CD8-positive, alpha-beta T cell (primary cell): ENCODE measurements at regions of chr10 and their contacts with region 1.

Region 1: DNA sequence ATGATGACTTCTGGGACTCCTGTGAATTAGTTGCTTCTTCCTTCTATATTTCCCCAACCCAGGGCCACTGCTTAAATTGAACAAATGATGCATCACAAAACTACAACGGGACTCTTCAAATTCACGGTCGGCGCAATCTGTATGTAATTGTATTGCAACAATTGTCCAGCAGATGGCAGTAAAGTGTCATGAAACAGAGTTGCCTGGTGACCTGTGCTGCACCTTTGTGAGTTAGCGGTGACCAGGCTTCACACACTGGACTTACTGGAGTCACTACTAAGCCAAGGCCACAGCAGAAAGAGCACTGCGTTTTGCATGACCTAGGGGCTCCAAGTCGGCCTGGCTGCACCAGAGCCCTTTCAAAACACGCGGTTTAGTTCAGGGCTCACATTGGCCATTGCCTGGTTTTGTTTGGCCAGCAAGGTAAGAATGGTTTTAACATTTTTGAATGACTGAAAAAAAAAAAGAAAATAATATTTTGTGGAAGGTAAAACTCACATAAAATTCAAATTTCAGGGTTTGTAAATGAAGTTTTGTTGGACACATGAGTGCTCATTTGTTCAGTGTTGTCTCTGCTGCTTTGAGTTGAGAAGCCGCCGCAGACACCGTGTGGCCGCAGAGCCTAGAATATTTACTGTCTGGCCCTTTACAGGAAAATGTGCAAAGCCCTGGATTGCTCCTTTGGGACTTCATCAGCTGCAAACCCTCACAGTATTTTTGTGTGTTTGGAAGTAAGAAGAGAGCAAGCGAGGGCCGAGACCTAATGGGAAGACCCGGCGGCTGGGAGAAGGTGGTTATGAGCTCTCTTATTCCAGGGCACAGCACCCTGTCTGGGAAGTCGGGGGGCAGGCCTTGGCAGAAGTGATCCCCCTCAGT is 23.2 kb upstream of the ZNF32 start:
- DNase-seq: peak in 8 of 9 experiments; percentile 25 to 75 (median 49)
- ATAC-seq: peak; percentile 61
- H3K4me3 ChIP-seq: no peak overlapping the region
- H3K4me3 Mint-ChIP-seq: no peak overlapping the region
- H3K27ac ChIP-seq: no peak overlapping the region
- H3K27ac Mint-ChIP-seq: no peak overlapping the region
- H3K4me1 ChIP-seq: peaks cover 5% of the 10 kb centered on the region
- H3K4me1 Mint-ChIP-seq: peaks cover 5% of the 10 kb centered on the region
- H3K27me3 ChIP-seq: peaks cover 7 to 8% of the 10 kb centered on the region in 2 experiments
- H3K27me3 Mint-ChIP-seq: peaks cover 37% of the 10 kb centered on the region
- CTCF ChIP-seq: peak; percentile 91

Region 2: GRCh38 chr10:43683451-43684291 is 11.8 kb after region 1 on chr10:
- CTCF ChIA-PET with region 1: interaction called, 33 read pairs
- POLR2A ChIA-PET with region 1: no interaction called
- intact Hi-C with region 1: no loop called
- DNase-seq: peak in 2 of 9 experiments; percentile 41 to 49
- ATAC-seq: peak; percentile 68
- H3K4me3 ChIP-seq: no peak overlapping the region
- H3K4me3 Mint-ChIP-seq: no peak overlapping the region
- H3K27ac ChIP-seq: no peak overlapping the region
- H3K27ac Mint-ChIP-seq: no peak overlapping the region
- H3K4me1 ChIP-seq: no peaks in the 10 kb centered on the region
- H3K4me1 Mint-ChIP-seq: peaks cover 1% of the 10 kb centered on the region
- H3K27me3 ChIP-seq: no peaks in the 10 kb centered on the region
- H3K27me3 Mint-ChIP-seq: peaks cover 25% of the 10 kb centered on the region
- CTCF ChIP-seq: peak; percentile 58

Region 3: GRCh38 chr10:44030143-44030542 is 358.2 kb after region 1 on chr10:
- CTCF ChIA-PET with region 1: interaction called, 7 read pairs
- POLR2A ChIA-PET with region 1: no interaction called
- intact Hi-C with region 1: loop called (anchors 1 to 5 kb)
- DNase-seq: peak in 4 of 9 experiments; percentile 3 to 54 (median 34)
- ATAC-seq: no peak
- H3K4me3 ChIP-seq: no peak overlapping the region
- H3K4me3 Mint-ChIP-seq: no peak overlapping the region
- H3K27ac ChIP-seq: no peak overlapping the region
- H3K27ac Mint-ChIP-seq: no peak overlapping the region
- H3K4me1 ChIP-seq: no peaks in the 10 kb centered on the region
- H3K4me1 Mint-ChIP-seq: no peaks in the 10 kb centered on the region
- H3K27me3 ChIP-seq: no peaks in the 10 kb centered on the region
- H3K27me3 Mint-ChIP-seq: peaks cover 9% of the 10 kb centered on the region
- CTCF ChIP-seq: no peak

Region 4: DNA sequence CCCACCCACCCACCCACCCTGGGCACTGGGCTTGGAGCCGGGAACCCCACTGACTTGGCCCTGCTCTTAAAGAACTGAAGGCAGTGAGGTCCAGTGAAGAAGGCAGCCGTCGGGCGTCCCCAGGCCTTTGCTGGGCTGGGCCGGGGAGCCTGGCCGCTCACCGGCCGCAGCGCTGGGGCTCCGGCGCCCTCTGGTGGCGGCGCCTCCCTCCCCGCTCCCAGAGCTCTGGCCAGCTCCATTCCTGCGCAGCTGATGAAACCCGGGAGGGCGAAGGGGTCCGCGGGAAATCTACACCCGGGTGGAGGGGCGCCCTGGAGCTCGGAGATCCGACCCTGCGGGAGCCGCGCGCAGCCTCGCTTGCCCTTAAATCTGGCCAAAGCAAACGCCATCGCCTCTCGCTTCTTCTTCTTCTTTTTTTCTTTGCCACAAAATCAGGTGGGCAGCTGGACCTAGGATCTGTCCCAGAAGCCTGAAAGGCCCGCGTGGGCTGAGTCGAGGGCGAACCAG is 714.7 kb after region 1 on chr10:
- CTCF ChIA-PET with region 1: interaction called, 19 read pairs
- POLR2A ChIA-PET with region 1: no interaction called
- intact Hi-C with region 1: loop called in 1 of 2 experiments (anchors 1 kb)
- DNase-seq: peak in 5 of 9 experiments; percentile 16 to 54 (median 44)
- ATAC-seq: no peak
- H3K4me3 ChIP-seq: no peak overlapping the region
- H3K4me3 Mint-ChIP-seq: no peak overlapping the region
- H3K27ac ChIP-seq: no peak overlapping the region
- H3K27ac Mint-ChIP-seq: no peak overlapping the region
- H3K4me1 ChIP-seq: no peaks in the 10 kb centered on the region
- H3K4me1 Mint-ChIP-seq: peaks cover 3% of the 10 kb centered on the region
- H3K27me3 ChIP-seq: peaks cover 3 to 5% of the 10 kb centered on the region in 2 experiments
- H3K27me3 Mint-ChIP-seq: peaks cover 30% of the 10 kb centered on the region
- CTCF ChIP-seq: peak; percentile 41

Region 5: GRCh38 chr10:44864637-44865288 is 1192.9 kb after region 1 on chr10:
- CTCF ChIA-PET with region 1: interaction called, 22 read pairs
- POLR2A ChIA-PET with region 1: no interaction called
- intact Hi-C with region 1: loop called (anchors 1 kb)
- DNase-seq: peak; percentile 62 to 90 (median 79)
- ATAC-seq: peak; percentile 76
- H3K4me3 ChIP-seq: peak overlapping the region; percentile 64 to 78
- H3K4me3 Mint-ChIP-seq: peak overlapping the region; percentile 90
- H3K27ac ChIP-seq: no peak overlapping the region
- H3K27ac Mint-ChIP-seq: peak overlapping the region; percentile 12
- H3K4me1 ChIP-seq: peaks cover 14% of the 10 kb centered on the region
- H3K4me1 Mint-ChIP-seq: peaks cover 19% of the 10 kb centered on the region
- H3K27me3 ChIP-seq: peaks cover 2 to 6% of the 10 kb centered on the region in 2 experiments
- H3K27me3 Mint-ChIP-seq: peaks cover 51% of the 10 kb centered on the region
- CTCF ChIP-seq: peak; percentile 88